AG04449 (cell line): ENCODE measurements at regions of chr9 and their contacts with region 1.

Region 1: GRCh38 chr9:95167998-95168397 is 149.5 kb downstream of the FANCC start:
- DNase-seq: peak; percentile 78
- H3K4me3 ChIP-seq: no peak overlapping the region
- CTCF ChIP-seq: peak; percentile 77

Region 2: GRCh38 chr9:94672811-94673487 is 495.0 kb before region 1 on chr9:
- CTCF ChIA-PET with region 1: interaction called, 11 read pairs
- POLR2A ChIA-PET with region 1: no interaction called
- DNase-seq: no peak
- H3K4me3 ChIP-seq: no peak overlapping the region
- CTCF ChIP-seq: no peak

Region 3: DNA sequence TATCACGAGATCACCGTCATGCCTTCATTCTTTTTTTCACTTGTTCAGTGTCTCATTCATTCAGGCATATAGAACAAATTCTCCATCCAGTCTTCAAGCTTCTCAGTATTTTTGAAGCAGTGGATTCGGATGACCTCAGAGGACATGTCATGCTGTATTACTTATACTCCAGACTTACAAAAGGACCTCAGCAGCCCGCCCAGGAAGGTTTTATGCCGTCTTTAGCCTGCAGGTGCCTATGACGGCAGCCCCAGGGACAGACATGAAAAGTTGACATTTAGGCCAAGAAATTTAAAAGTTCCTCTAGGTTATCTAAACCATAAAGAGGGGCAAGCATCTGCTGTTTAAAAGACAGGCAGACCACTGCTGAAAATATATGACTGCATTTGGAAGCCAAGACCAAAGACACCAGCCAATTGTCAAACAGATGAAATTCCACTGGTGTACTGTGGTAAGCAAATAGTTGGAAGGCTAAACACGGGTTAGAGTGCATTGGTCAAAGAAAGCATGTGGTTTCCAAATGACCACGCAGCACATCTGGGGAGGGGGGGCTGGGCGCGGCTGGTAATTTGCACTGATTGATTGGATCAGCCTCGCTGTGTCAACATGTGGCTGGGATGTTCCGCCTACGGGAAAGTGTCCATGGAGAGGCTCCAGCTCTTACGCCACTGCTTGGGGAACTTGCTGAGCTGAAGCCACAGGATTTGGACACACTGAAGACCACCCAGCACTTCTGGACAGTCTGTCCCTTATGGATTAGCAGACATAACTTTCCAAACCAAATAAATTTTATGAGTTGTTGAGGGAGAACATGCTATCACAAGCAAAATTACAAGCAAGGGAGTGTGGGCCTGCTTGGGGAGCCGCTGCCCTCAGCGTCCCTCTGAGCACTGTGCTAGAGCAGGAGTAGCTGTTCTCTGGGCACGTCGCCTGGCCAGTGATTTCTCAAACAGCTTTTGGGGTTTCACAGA is 24.1 kb before region 1 on chr9:
- CTCF ChIA-PET with region 1: interaction called, 15 read pairs
- POLR2A ChIA-PET with region 1: no interaction called
- DNase-seq: no peak
- H3K4me3 ChIP-seq: no peak overlapping the region
- CTCF ChIP-seq: no peak

Region 4: DNA sequence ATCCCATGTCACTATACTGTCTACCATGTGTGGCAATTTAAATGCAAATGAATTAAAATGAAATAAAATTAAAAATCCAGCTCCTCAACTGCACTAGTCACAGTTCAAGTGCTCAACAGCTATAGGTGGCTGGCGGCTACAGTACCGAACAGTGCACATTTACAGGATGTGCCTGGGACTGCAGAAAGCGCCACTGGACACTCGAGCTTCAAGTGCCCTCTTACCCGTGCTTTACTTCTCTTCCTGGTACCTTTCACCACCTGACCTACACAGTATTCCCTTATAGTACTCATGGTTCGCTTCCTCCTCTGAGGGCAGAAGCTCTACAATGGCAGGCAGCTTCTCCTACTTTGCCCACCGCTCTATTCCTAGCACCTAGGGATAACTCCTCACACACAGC is 17.1 kb before region 1 on chr9:
- CTCF ChIA-PET with region 1: interaction called, 34 read pairs
- POLR2A ChIA-PET with region 1: no interaction called
- DNase-seq: no peak
- H3K4me3 ChIP-seq: no peak overlapping the region
- CTCF ChIP-seq: no peak

Region 5: GRCh38 chr9:95157481-95158151 is 10.4 kb before region 1 on chr9:
- CTCF ChIA-PET with region 1: interaction called, 34 read pairs
- POLR2A ChIA-PET with region 1: no interaction called
- DNase-seq: peak; percentile 71
- H3K4me3 ChIP-seq: no peak overlapping the region
- CTCF ChIP-seq: no peak

Region 6: DNA sequence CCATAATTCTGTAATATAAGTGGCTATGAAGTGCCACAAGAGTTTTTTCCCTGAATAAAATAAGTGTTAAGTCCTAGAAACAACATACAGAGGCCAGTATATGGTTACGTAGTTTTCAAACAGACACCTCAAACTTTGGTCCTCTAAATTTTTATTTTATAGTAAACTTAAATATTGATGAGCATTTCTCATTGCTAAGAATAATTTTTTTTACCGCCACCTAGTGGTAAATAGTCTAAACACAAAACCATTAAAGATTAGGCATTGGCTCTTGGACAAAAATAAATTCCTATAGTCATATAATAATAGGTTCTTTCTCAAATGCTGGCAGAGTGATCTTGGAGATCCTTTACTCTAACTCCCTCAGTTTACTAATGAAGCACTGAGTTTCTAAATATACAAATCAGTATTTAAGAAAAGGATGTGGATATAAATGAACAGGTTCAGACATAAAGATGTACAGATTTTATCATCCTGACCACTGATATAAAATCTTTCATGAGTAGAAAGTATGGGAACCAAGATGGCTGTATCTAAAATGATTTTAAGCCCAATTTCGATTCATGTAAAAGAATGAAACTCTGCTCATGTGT is 13.3 kb after region 1 on chr9:
- CTCF ChIA-PET with region 1: interaction called, 44 read pairs
- POLR2A ChIA-PET with region 1: no interaction called
- DNase-seq: no peak
- H3K4me3 ChIP-seq: no peak overlapping the region
- CTCF ChIP-seq: no peak

Region 7: DNA sequence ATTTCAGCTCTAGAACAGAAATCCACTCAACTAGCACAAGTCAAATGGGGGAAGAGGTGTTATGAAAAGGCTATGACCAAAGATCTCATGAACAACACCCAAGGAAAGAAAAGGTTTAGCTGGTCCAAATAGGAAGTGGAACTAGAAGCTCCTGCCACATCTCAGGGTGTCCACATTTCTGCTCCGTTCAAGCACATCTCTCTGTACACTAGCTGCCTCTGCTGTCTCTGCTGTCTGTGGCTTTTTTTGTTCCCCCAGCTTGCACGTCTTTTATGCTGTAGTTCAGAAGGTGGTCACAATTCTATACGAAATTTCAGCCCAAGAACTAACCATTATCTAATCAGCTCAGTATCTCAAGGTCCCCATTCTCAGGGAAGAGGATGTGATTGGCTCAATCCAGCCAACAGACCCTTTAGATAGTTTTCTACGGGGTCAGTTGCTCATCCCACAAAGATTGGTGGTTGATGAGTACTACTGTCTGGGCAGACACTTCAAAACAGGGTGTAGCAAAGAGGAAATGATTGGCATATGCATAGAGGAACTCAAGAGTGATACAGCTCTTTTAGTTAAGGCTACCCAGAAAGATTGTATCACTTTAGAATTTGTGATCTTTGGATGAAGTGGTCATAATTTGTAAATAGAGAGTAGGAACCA is 105.5 kb after region 1 on chr9:
- CTCF ChIA-PET with region 1: no interaction called
- POLR2A ChIA-PET with region 1: no interaction called
- DNase-seq: no peak
- H3K4me3 ChIP-seq: no peak overlapping the region
- CTCF ChIP-seq: no peak

Region 8: GRCh38 chr9:95678759-95679158 is 510.8 kb after region 1 on chr9:
- CTCF ChIA-PET with region 1: no interaction called
- POLR2A ChIA-PET with region 1: no interaction called
- DNase-seq: no peak
- H3K4me3 ChIP-seq: no peak overlapping the region
- CTCF ChIP-seq: no peak